ENCODE measurements at regions of chr9 and their contacts with region 1.

Region 1: GRCh38 chr9:20884985-20885593 is 146.4 kb downstream of the HACD4 start:
- DNase-seq: peak; percentile 55
- ATAC-seq: peak in 1 of 2 donors; percentile 62
- H3K4me3 ChIP-seq: no peak overlapping the region
- H3K27ac ChIP-seq: no peak overlapping the region
- H3K4me1 ChIP-seq: no peaks in the 10 kb centered on the region
- H3K27me3 ChIP-seq: no peaks in the 10 kb centered on the region
- CTCF ChIP-seq: peak; percentile 72

Region 2: DNA sequence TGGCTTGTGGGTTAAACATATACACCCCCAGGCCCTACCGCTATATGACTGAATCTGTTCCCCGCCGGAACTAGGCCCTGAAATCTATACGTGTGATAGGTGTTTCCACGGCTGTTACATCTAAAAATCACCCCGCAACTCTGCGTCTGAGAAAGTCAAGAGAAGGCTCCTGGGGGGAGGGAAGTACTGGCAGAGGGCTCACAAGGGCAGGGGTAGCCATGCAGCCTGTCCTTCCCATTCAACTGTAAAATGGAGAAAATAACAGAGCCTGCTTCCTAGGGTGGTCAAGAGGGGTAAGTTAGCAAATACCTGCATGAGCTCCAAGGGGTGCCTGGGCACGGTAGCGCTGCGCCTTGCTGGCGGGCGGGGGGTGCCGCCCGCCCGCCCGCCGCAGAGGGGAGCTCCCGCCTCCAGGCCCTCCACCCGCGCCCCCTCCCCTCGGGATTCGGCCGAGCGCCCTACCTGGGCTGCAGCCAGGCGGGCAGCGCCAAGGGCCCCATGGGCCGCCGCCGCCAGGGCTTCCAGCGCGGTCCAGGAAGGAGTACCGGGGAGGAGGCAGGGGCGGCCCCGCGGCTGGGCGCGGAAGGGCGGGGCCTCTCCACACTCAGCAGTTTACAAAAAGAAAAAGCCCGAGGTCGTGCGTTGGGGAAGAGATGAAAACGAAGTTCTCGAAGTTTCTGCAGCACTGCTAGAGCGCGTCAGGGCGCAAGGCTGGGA is 146.2 kb after region 1 on chr9 and contains the start of gene HACD4:
- intact Hi-C with region 1: no loop called
- DNase-seq: peak; percentile 81
- ATAC-seq: peak; percentile 94
- H3K4me3 ChIP-seq: peak within 1 kb of the TSS; percentile 72
- H3K27ac ChIP-seq: peak within 1 kb of the TSS; percentile 88
- H3K4me1 ChIP-seq: peaks cover 27% of the 10 kb centered on the region
- H3K27me3 ChIP-seq: no peaks in the 10 kb centered on the region
- CTCF ChIP-seq: no peak
- total RNA-seq, gene HACD4: 13.5 TPM

Region 3: DNA sequence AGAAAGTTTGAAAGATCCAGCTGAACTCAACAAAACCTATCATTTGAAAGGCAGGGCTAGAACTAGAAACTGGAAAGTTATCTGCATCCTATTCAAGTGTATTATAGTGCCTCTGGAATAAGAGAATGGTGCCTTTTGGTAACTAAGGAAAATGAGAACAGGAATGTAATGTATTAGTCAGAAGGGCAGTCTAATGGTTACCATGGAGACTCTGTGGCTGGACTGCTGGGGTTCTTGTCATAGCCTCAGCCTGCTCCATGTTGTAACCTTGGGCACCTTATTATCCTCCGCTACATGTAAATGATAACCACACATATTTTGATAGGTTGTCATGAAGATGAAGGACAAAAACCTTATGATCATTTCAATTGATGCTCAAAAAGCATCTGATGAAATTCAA is 217.2 kb after region 1 on chr9:
- intact Hi-C with region 1: loop called (anchors 10 kb)
- DNase-seq: no peak
- ATAC-seq: no peak
- H3K4me3 ChIP-seq: no peak overlapping the region
- H3K27ac ChIP-seq: no peak overlapping the region
- H3K4me1 ChIP-seq: peaks cover 1% of the 10 kb centered on the region
- H3K27me3 ChIP-seq: no peaks in the 10 kb centered on the region
- CTCF ChIP-seq: no peak

Measured in lower lobe of right lung (tissue), 2 donors.